H1 (cell line): ENCODE measurements at regions of chr17 and their contacts with region 1.

Region 1: GRCh38 chr17:7703584-7704479 is 1.2 kb upstream of the EFNB3 start:
- DNase-seq: peak; percentile 61 to 77
- H3K4me3 ChIP-seq: peak overlapping the region; percentile 56 to 86 (median 66); a peak in 5 of 8 replicates
- H3K27ac ChIP-seq: peak overlapping the region; percentile 80; the same call in 1 of the 2 replicates
- H3K4me1 ChIP-seq: peaks cover 2 to 19% (median 16%) of the 10 kb centered on the region in 4 experiments
- H3K27me3 ChIP-seq: peaks cover 0 to 3% (median 1%) of the 10 kb centered on the region in 4 experiments; a peak in 2 of 7 replicates
- CTCF ChIP-seq: no peak
- EP300 ChIP-seq: peak in 1 of 2 experiments; percentile 76; a peak in 1 of 3 replicates
- POLR2A ChIP-seq: peak in 1 of 2 experiments; percentile 29; a peak in 1 of 3 replicates
- RAD21 ChIP-seq: no peak

Region 2: DNA sequence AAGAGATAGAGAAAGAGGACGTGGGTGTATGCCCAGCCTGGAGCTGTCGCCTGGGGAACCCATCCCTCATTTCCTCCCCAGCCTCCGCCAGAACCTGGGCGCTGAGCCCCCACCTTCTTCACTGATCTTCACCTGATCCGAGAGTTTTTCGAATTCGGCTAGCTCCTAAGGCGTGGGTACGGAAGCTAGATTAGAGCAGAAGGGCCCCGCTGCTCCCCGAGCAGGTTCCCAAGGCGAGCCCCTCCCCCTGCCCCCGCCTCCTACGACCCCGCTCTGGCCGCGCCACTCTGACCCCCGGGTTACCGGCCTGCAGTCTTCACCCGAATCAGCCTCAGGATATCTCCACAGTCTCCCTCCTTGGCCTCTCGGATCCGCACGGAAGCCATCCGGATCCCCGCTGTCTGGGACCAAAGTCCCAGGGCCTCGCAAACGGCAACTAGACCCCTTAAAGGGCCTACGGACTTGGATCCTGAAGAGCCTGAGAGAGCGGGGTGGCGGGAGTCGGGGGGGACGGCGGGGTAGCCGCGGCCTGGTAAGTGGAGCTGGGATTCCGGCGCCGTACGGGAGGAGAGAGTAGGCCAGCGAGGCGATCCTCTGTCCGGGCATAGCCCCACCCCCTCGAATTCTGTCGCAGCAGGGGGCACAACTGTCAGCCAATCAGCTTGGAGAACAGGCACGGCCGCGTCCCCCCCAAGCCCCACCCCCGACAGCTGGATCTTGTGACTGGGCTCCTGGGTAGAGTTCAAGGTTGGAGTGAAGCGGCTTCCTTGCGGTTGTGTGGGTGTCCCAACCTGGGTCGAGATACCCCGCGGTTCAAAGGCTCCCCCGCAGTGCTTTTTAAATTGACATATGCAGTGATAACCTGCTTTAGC is 76.3 kb before region 1 on chr17 and contains the start of gene SAT2:
- CTCF ChIA-PET with region 1: interaction called, 31 read pairs
- POLR2A ChIA-PET with region 1: interaction called, 20 read pairs
- DNase-seq: peak; percentile 87 to 100
- H3K4me3 ChIP-seq: peak within 1 kb of the TSS; percentile 72 to 98 (median 76)
- H3K27ac ChIP-seq: peak within 1 kb of the TSS; percentile 16; the same call in 1 of the 2 replicates
- H3K4me1 ChIP-seq: peaks cover 2 to 10% (median 4%) of the 10 kb centered on the region in 4 experiments; a peak in 5 of 7 replicates
- H3K27me3 ChIP-seq: no peaks in the 10 kb centered on the region
- CTCF ChIP-seq: no peak
- EP300 ChIP-seq: peak in 1 of 2 experiments; percentile 77; a peak in 1 of 3 replicates
- POLR2A ChIP-seq: peak in 1 of 2 experiments; percentile 75; a peak in 2 of 3 replicates
- RAD21 ChIP-seq: no peak
- total RNA-seq, gene SAT2: 72.3 and 75.3 TPM in 2 replicates

Region 3: DNA sequence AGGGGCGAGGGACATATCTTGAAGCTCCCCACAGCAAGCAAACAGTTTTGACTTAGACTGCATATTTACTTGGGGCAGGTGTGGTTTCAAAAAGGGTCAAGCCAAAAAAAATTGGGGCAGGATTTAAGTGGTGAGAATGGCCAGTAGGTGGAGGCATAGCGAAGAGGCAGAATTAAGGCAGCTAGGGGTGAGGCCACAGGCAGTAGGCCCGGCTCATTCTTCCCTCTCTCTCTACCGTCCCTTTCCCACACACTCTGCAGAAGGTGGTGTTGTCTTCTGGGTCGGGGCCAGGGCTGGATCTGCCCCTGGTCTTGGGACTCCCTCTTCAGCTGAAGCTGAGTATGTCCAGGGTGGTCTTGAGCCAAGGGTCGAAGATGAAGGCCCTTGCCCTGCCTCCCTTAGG is 71.3 kb before region 1 on chr17:
- CTCF ChIA-PET with region 1: interaction called, 31 read pairs
- POLR2A ChIA-PET with region 1: interaction called, 20 read pairs
- DNase-seq: peak; percentile 39 to 66
- H3K4me3 ChIP-seq: no peak overlapping the region
- H3K27ac ChIP-seq: no peak overlapping the region
- H3K4me1 ChIP-seq: peaks cover 0 to 12% (median 3%) of the 10 kb centered on the region in 4 experiments; a peak in 3 of 7 replicates
- H3K27me3 ChIP-seq: no peaks in the 10 kb centered on the region
- CTCF ChIP-seq: peak; percentile 61 to 85 (median 79)
- EP300 ChIP-seq: no peak
- POLR2A ChIP-seq: no peak
- RAD21 ChIP-seq: peak; percentile 75 to 81

Region 4: DNA sequence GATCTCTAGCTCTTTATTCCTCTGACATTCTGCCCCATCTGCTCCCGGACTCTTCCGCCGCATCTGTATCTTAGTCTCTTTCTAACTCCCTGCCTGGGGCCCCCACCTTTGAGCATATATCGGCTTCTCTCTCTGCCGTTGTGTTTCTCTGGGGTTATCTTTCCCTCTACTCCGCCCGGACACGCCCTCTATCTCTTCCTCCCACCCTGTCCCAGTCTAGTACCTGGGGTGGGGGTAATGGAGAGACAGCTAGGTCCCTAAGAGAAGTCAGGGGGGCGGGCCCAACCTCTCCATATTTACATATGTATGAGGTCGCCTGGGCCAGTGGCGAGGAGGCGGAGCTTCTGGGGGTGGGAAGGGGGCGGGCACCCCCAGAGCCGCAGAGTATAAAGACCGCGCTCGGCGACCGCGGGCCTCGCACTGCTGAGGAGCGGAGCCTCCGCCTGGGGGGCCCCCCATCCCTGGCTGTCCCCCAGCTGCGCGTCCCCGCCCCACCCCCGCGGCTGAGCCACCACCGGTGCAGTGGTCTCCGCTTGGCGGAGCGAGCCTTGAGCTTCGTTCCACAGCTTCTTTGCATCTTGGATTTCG is 53.2 kb before region 1 on chr17 and contains the start of gene ATP1B2:
- CTCF ChIA-PET with region 1: interaction called, 4 read pairs
- POLR2A ChIA-PET with region 1: interaction called, 16 read pairs
- DNase-seq: peak; percentile 72 to 90
- H3K4me3 ChIP-seq: peak within 1 kb of the TSS; percentile 43 to 87 (median 63)
- H3K27ac ChIP-seq: no peak within 1 kb of the TSS
- H3K4me1 ChIP-seq: peaks cover 0 to 12% (median 8%) of the 10 kb centered on the region in 4 experiments; a peak in 5 of 7 replicates
- H3K27me3 ChIP-seq: peaks cover 0 to 13% (median 4%) of the 10 kb centered on the region in 4 experiments; a peak in 4 of 7 replicates
- CTCF ChIP-seq: no peak
- EP300 ChIP-seq: no peak
- POLR2A ChIP-seq: peak in 1 of 2 experiments; percentile 81; a peak in 2 of 3 replicates
- RAD21 ChIP-seq: no peak
- total RNA-seq, gene ATP1B2: 19.8 and 21.0 TPM in 2 replicates

Region 5: GRCh38 chr17:7656958-7657609 is 46.7 kb before region 1 on chr17:
- CTCF ChIA-PET with region 1: interaction called, 3 read pairs
- POLR2A ChIA-PET with region 1: interaction called, 12 read pairs
- DNase-seq: peak; percentile 88 to 90
- H3K4me3 ChIP-seq: peak overlapping the region in 2 of 4 experiments; percentile 3 to 47; a peak in 3 of 8 replicates
- H3K27ac ChIP-seq: peak overlapping the region; percentile 38; the same call in 1 of the 2 replicates
- H3K4me1 ChIP-seq: peaks cover 7 to 16% (median 12%) of the 10 kb centered on the region in 4 experiments
- H3K27me3 ChIP-seq: peaks cover 0 to 9% (median 2%) of the 10 kb centered on the region in 4 experiments; a peak in 3 of 7 replicates
- CTCF ChIP-seq: peak in 2 of 3 experiments; percentile 9 to 29; a peak in 2 of 4 replicates
- EP300 ChIP-seq: 0 out of 3 replicates have a peak, but pooled peaks of 1 of the 2 experiments have one; percentile 67
- POLR2A ChIP-seq: peak in 1 of 2 experiments; percentile 60; a peak in 2 of 3 replicates
- RAD21 ChIP-seq: peak; percentile 6 to 32; a peak in 3 of 4 replicates

Region 6: GRCh38 chr17:7716901-7717755 is 13.3 kb after region 1 on chr17 and contains the start of gene DNAH2:
- CTCF ChIA-PET with region 1: interaction called, 47 read pairs
- POLR2A ChIA-PET with region 1: interaction called, 27 read pairs
- DNase-seq: peak; percentile 91 to 96
- H3K4me3 ChIP-seq: peak within 1 kb of the TSS; percentile 54 to 81 (median 71)
- H3K27ac ChIP-seq: no peak within 1 kb of the TSS; the same call in 1 of the 2 replicates
- H3K4me1 ChIP-seq: peaks cover 6 to 20% (median 14%) of the 10 kb centered on the region in 4 experiments
- H3K27me3 ChIP-seq: peaks cover 0 to 19% (median 7%) of the 10 kb centered on the region in 4 experiments; a peak in 3 of 7 replicates
- CTCF ChIP-seq: peak; percentile 60 to 74 (median 69)
- EP300 ChIP-seq: no peak
- POLR2A ChIP-seq: no peak
- RAD21 ChIP-seq: peak; percentile 51 to 59
- total RNA-seq, gene DNAH2: 0.13 and 0.21 TPM in 2 replicates